ENCODE measurements at regions of chr19 and their contacts with region 1.

Region 1: GRCh38 chr19:18058208-18059030 is 28.3 kb downstream of the IL12RB1 start:
- DNase-seq: peak; percentile 85 to 94
- ATAC-seq: peak; percentile 94
- H3K4me3 ChIP-seq: no peak overlapping the region
- H3K27ac ChIP-seq: peak overlapping the region in 1 of 2 donors; percentile 42
- H3K4me1 ChIP-seq: no peaks in the 10 kb centered on the region
- H3K27me3 ChIP-seq: no peaks in the 10 kb centered on the region

Region 2: GRCh38 chr19:17947815-17948513 is 110.5 kb before region 1 on chr19:
- intact Hi-C with region 1: loop called in 1 of 2 experiments (anchors 5 kb)
- DNase-seq: peak; percentile 94 to 96
- ATAC-seq: peak; percentile 92
- H3K4me3 ChIP-seq: peak overlapping the region; percentile 65 to 86
- H3K27ac ChIP-seq: no peak overlapping the region
- H3K4me1 ChIP-seq: no peaks in the 10 kb centered on the region
- H3K27me3 ChIP-seq: no peaks in the 10 kb centered on the region

Region 3: DNA sequence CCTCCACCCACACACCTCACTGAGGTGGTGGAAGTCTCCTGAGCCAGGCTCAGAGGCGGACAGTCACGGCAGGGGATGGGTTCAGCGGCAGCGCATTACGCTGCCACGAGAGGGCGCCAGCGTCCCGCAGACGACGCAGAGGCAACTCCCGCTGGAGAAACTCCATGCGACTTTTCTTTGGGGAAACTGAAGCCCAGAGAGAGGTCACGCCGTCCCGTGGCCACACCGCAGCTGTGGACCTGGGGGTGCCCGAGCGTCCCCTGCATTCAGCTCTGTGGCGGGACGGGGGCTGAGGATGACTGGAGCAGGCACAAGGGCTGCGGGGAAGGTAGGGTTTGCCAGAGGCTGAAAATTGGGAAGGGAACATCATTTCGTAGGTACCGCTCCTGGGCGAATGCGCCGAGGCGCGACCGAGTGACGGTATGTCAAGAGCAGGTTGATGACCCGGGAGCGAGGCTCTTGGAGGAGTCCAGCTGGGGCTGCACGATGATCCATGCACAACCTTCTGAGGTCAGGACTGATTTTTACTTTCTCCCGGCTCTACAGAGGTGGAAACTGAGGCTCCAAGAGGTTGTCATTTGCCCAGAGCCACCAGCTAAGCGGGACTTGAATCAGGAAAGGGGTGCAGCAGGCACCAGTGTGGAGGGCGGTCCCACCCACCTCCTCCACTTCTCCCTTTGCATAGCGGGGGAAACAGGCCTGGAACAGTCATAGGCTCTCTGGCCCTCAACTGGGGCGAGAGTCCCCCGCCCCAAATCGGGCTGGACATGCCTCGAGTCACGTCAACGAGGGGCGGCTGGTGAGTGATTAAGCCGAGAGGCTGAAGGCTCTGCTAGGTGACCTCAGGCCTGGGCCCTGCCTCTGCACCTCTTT is 51.1 kb before region 1 on chr19:
- intact Hi-C with region 1: loop called (anchors 1 to 2 kb)
- DNase-seq: peak; percentile 90 to 94
- ATAC-seq: peak; percentile 94
- H3K4me3 ChIP-seq: peak overlapping the region; percentile 13 to 22
- H3K27ac ChIP-seq: peak overlapping the region in 1 of 2 donors; percentile 63
- H3K4me1 ChIP-seq: no peaks in the 10 kb centered on the region
- H3K27me3 ChIP-seq: no peaks in the 10 kb centered on the region

Measured in aorta (tissue), 5 donors.